ENCODE measurements at regions of chr10 and their contacts with region 1.

Region 1: GRCh38 chr10:124394583-124394982 is 24.1 kb downstream of the OAT start:
- DNase-seq: peak; percentile 78
- H3K27ac ChIP-seq: no peak overlapping the region
- CTCF ChIP-seq: no peak

Region 2: GRCh38 chr10:124308811-124309210 is 85.8 kb before region 1 on chr10:
- CTCF ChIA-PET with region 1: no interaction called
- POLR2A ChIA-PET with region 1: no interaction called
- DNase-seq: no peak
- H3K27ac ChIP-seq: no peak overlapping the region
- CTCF ChIP-seq: no peak

Region 3: GRCh38 chr10:124429576-124429975 is 35.0 kb after region 1 on chr10:
- CTCF ChIA-PET with region 1: interaction called, 13 read pairs
- POLR2A ChIA-PET with region 1: no interaction called
- DNase-seq: no peak
- H3K27ac ChIP-seq: no peak overlapping the region
- CTCF ChIP-seq: no peak

Region 4: GRCh38 chr10:124477614-124478363 is 83.2 kb after region 1 on chr10:
- CTCF ChIA-PET with region 1: no interaction called
- POLR2A ChIA-PET with region 1: no interaction called
- DNase-seq: peak; percentile 14
- H3K27ac ChIP-seq: peak overlapping the region; percentile 74
- CTCF ChIP-seq: no peak